Activated naive CD4-positive, alpha-beta T cell treated with anti-CD3 and anti-CD28 coated beads for 36 hours (primary cell): ENCODE measurements at regions of chr7 and their contacts with region 1.

Region 1: DNA sequence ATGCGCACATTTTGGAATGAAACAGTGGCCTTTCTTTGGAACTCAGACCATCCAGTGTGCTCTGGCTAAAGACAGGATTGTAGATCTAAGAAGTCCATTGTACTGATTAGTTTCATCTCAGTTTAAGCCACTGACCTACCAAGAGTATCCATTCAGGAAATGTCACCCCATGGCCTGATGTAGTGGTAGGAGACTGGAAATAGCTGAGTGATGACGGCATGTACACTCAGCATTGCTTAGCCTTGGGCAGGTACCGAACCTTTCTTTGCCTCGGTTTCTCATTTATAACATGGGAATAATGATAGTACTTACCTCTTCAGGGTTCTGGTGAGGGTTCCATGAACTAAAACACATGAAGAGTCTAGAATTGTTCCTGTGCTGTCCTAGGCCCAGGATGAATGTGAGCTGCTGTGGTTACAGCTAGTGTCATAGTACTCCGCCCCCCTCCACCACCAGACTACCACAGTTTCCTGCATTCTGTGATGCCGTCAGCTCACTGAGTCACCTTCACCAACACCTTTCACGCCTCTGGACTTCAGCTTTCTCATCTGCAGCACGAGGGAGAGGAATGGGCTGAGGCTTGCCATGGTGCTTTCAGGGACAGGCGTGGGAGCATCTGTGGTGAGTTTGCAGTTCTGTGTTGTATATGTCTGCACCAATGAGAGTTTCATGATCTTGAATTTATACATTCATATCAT is 484.0 kb upstream of the GALNT17 start:
- DNase-seq: peak; percentile 84
- H3K4me3 Mint-ChIP-seq: no peak overlapping the region
- H3K27ac Mint-ChIP-seq: no peak overlapping the region
- H3K4me1 Mint-ChIP-seq: peaks cover 8% of the 10 kb centered on the region
- H3K27me3 Mint-ChIP-seq: no peaks in the 10 kb centered on the region

Region 2: DNA sequence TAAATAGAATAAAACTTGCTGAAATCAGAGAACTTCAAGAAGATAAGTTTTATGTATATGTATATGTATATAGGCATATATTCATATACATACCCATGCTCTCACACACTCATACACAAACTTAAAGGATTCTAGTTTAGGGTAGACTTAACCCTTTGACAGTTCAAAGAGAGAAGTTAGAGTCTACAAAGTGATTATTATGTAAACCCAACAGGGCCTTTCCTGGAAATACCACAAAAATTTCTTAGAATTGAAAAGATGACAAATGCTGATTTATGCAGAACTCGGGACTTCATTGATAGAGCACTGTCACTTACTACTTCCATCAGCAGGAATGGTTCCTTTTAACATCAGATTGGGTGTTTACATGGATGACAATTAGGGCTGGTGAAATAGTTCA is 286.1 kb before region 1 on chr7:
- CTCF ChIA-PET with region 1: no interaction called
- intact Hi-C with region 1: loop called (anchors 2 kb)
- DNase-seq: no peak
- H3K4me3 Mint-ChIP-seq: no peak overlapping the region
- H3K27ac Mint-ChIP-seq: no peak overlapping the region
- H3K4me1 Mint-ChIP-seq: peaks cover 6% of the 10 kb centered on the region
- H3K27me3 Mint-ChIP-seq: no peaks in the 10 kb centered on the region

Region 3: GRCh38 chr7:70630818-70631457 is 17.0 kb before region 1 on chr7:
- CTCF ChIA-PET with region 1: no interaction called
- intact Hi-C with region 1: no loop called
- DNase-seq: no peak
- H3K4me3 Mint-ChIP-seq: no peak overlapping the region
- H3K27ac Mint-ChIP-seq: no peak overlapping the region
- H3K4me1 Mint-ChIP-seq: no peaks in the 10 kb centered on the region
- H3K27me3 Mint-ChIP-seq: no peaks in the 10 kb centered on the region

Region 4: DNA sequence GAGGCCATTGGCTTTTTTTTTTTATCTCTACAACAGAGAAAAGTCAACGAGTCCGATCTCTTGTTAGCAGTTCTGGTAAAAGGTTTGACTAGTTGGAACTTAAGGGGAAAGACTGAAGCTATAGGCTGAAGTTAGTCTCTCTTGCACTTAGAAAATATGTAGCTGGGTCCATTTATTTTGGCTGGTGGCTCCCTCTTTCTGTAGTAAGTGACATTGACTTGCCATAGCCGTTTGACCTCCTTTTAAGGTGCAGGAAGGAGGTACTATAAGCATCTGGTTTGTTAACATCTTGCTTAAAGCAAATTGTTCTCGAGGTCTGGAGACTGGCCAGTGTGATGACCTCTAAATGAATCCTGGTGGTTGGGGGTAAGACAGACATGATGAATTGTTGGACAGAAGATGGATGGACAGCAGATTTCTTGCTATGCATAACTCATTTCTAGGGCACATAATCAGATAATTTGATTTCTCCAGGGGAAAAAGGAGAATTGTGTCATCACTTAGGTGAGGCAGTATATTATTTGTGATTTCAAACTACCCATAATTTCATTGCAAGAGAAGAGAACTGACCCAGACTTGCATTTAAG is 127.7 kb after region 1 on chr7:
- CTCF ChIA-PET with region 1: no interaction called
- intact Hi-C with region 1: no loop called
- DNase-seq: no peak
- H3K4me3 Mint-ChIP-seq: no peak overlapping the region
- H3K27ac Mint-ChIP-seq: no peak overlapping the region
- H3K4me1 Mint-ChIP-seq: peaks cover 2% of the 10 kb centered on the region
- H3K27me3 Mint-ChIP-seq: no peaks in the 10 kb centered on the region